B cell (primary cell): ENCODE measurements at regions of chr6 and their contacts with region 1.

Region 1: GRCh38 chr6:18317850-18318249 is 53.5 kb upstream of the DEK start:
- DNase-seq: no peak
- ATAC-seq: no peak
- H3K4me3 ChIP-seq: no peak overlapping the region
- H3K4me3 Mint-ChIP-seq: no peak overlapping the region
- H3K27ac ChIP-seq: no peak overlapping the region
- H3K27ac Mint-ChIP-seq: no peak overlapping the region
- H3K4me1 ChIP-seq: no peaks in the 10 kb centered on the region
- H3K4me1 Mint-ChIP-seq: no peaks in the 10 kb centered on the region
- H3K27me3 ChIP-seq: no peaks in the 10 kb centered on the region
- H3K27me3 Mint-ChIP-seq: peaks cover 3% of the 10 kb centered on the region
- CTCF ChIP-seq: no peak

Region 2: DNA sequence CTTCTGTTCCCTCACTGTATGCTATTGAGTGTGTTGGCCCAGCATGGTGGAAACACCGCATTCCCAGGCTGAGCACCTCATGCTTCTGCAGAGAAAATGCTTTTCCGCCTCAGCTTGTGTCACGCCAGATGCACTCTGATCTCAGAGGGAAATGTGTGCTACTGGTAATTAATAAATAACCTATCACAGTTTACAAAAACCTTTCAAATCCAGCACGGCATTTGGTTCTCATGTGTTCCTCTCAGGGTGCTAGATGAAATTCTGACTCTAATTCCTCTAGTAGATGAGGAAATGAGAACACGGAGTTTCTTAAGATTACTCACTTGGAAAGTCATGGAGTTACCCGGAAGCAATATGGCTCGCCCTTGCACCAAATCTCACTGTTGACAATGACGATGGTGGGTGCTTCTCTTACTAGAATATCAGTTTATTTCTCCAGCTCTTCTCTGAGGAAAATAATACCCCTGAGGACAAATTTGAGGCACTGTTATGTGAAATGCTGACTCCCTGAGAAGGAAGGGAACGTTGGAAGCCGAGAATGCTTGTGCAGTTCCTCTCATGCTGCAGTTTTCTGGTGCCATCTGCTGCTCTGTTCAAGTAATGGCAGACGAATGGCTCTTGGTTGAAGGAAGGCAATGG is 185.9 kb after region 1 on chr6:
- CTCF ChIA-PET with region 1: interaction called, 379 read pairs
- POLR2A ChIA-PET with region 1: no interaction called
- intact Hi-C with region 1: no loop called
- DNase-seq: peak; percentile 74
- ATAC-seq: peak; percentile 79
- H3K4me3 ChIP-seq: peak overlapping the region in 3 of 5 experiments; percentile 22 to 41 (median 40)
- H3K4me3 Mint-ChIP-seq: peak overlapping the region; percentile 74
- H3K27ac ChIP-seq: no peak overlapping the region
- H3K27ac Mint-ChIP-seq: no peak overlapping the region
- H3K4me1 ChIP-seq: peaks cover 7 to 17% of the 10 kb centered on the region in 2 donors
- H3K4me1 Mint-ChIP-seq: peaks cover 12% of the 10 kb centered on the region
- H3K27me3 ChIP-seq: no peaks in the 10 kb centered on the region
- H3K27me3 Mint-ChIP-seq: no peaks in the 10 kb centered on the region
- CTCF ChIP-seq: peak; percentile 97